Activated T-helper 2 cell treated with anti-CD3 and anti-CD28 coated beads, Interferon-gamma antibody, Interleukin-2, Interleukin-4, amounts not matched to agents 10 μg/mL and 5 μg/mL and 100 μg/mL, durations not matched to agents 14 hours and 24 hours and 36 hours (primary cell): ENCODE measurements at regions of chr13 and their contacts with region 1.

Region 1: DNA sequence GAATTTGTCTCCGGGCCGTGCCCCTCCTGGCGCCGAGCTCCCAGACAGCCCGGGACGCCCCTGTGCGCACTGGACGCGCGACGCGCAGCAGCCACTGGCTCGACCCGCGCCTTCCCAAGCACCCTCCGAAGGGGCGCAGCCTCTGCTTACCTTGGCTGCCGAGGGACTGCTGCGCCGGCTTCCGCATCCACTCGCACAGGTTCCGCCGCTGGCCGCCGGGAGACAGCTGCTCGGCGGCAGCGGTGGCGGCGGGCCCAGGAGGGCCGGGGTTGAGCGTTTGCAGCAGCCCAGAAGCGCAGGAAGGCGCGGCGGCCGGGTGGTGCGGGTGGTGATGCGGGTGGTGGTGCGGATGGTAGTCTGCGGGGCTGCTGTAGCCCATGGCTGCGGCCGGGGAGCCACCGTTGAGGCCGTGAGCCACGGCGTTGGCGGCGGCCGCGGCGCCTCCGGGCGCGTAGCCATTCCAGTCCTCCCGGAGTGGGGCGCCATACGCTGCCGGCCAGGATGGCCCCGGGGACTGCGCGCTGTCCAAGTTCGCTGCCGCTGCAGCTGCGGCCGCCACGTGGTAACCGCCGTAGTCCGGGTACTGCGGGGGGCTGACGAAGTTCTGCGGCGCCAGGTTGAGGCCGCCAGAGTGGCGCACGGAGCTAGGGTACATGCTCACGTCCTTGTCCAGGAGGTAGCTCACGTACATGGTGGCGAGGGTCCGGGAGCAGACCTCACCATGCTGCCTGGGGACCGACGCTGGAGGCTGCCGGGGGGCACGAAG is 616 bp downstream of the CDX2 start:
- DNase-seq: no peak
- H3K4me3 Mint-ChIP-seq: no peak overlapping the region
- H3K27ac Mint-ChIP-seq: no peak overlapping the region
- H3K4me1 Mint-ChIP-seq: no peaks in the 10 kb centered on the region
- H3K27me3 Mint-ChIP-seq: peaks cover 81% of the 10 kb centered on the region

Region 2: DNA sequence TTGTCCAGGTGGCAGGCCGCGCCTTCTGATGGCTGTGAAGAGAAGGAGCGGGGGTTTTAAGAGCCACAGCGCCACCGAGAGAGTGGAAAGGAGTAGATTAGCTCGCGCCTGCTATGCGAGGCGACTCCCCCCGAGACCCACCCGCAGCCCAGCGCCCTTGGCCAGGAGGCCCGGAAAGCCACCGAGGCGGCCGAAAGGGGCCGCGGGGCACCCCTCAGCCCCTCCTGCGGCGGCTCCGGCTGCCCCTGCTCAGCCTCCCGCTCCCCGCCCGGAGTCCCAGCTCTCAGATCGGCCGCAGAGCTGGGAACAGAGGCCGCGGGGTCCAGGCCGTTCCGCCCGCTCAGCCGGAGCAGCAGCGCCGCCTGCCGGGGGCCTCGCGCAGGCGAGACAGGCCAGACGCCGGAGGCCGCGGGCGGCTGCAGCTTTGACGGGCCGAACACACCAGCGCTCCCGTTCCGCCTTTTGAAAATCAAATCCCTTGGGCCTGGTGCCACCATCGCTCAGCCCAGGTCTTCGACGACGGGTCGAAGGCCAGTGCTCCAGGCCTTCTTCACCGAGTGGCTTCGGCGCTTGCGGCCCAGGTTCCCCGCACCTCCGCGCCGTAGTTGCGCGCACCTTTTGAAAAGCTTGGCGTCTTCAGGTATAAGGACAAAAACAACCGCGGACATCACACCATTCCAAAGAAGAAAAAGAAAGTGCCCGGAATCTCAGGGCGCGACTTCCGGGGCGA is 14.7 kb before region 1 on chr13:
- intact Hi-C with region 1: loop called (anchors 2 kb)
- DNase-seq: peak; percentile 47
- H3K4me3 Mint-ChIP-seq: peak overlapping the region; percentile 66
- H3K27ac Mint-ChIP-seq: no peak overlapping the region
- H3K4me1 Mint-ChIP-seq: peaks cover 9% of the 10 kb centered on the region
- H3K27me3 Mint-ChIP-seq: peaks cover 63% of the 10 kb centered on the region